ENCODE measurements at regions of chr22 and their contacts with region 1.

Region 1: DNA sequence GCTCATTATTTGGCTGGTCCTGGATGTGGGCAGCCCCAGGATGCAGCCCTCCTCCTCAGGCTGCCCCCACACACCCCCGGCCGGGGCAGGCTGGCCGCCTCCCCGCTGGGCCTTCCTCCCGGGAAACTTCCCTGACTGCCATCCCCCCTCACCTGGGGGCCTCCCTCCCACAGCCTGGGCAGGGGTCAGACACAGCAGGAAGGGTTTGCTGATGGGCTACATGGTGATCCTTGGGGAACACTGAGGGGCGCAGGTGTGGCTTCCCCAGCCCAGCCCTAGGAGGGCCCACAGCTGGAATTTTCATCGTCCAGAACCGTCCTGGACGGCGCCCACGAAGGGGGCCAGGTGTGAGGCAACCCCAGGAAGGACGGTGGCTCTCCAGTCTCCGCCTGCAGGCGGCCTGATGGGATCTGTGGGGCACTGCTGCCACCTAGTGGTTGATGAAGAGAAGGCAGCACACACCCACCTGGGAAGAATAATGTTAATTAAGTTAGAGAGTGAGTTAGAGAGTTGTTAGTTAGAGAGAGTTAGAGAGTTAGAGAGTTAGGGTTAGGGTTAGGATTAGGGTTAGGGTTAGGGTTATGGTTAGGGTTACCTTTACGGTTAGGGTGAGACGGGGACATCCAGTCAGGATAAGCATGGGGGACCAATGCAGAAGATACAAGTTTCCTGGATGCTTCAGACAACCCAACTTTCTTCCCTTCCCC is 75.9 kb upstream of the PRR5 start:
- DNase-seq: peak; percentile 65 to 85 (median 85)
- ATAC-seq: peak; percentile 64 to 66
- H3K4me3 ChIP-seq: no peak overlapping the region
- H3K27ac ChIP-seq: no peak overlapping the region
- H3K4me1 ChIP-seq: no peaks in the 10 kb centered on the region
- H3K27me3 ChIP-seq: no peaks in the 10 kb centered on the region

Region 2: GRCh38 chr22:43993027-43993760 is 632.9 kb before region 1 on chr22:
- intact Hi-C with region 1: loop called (anchors 2 to 5 kb)
- DNase-seq: peak; percentile 50 to 82 (median 74)
- ATAC-seq: peak; percentile 73 to 75
- H3K4me3 ChIP-seq: no peak overlapping the region
- H3K27ac ChIP-seq: no peak overlapping the region
- H3K4me1 ChIP-seq: no peaks in the 10 kb centered on the region
- H3K27me3 ChIP-seq: no peaks in the 10 kb centered on the region

Region 3: GRCh38 chr22:44074337-44074984 is 551.7 kb before region 1 on chr22:
- intact Hi-C with region 1: loop called in 1 of 4 experiments (anchors 10 kb)
- DNase-seq: no peak
- ATAC-seq: peak in 1 of 2 donors; percentile 19
- H3K4me3 ChIP-seq: no peak overlapping the region
- H3K27ac ChIP-seq: no peak overlapping the region
- H3K4me1 ChIP-seq: no peaks in the 10 kb centered on the region
- H3K27me3 ChIP-seq: no peaks in the 10 kb centered on the region

Region 4: GRCh38 chr22:44080936-44081861 is 544.9 kb before region 1 on chr22:
- intact Hi-C with region 1: loop called (anchors 5 to 10 kb)
- DNase-seq: peak; percentile 81 to 93 (median 83)
- ATAC-seq: peak in 1 of 2 donors; percentile 21
- H3K4me3 ChIP-seq: no peak overlapping the region
- H3K27ac ChIP-seq: no peak overlapping the region
- H3K4me1 ChIP-seq: no peaks in the 10 kb centered on the region
- H3K27me3 ChIP-seq: no peaks in the 10 kb centered on the region

Region 5: GRCh38 chr22:44289414-44290171 is 336.5 kb before region 1 on chr22:
- intact Hi-C with region 1: no loop called
- DNase-seq: peak in 1 of 3 donors; percentile 41
- ATAC-seq: no peak
- H3K4me3 ChIP-seq: no peak overlapping the region
- H3K27ac ChIP-seq: no peak overlapping the region
- H3K4me1 ChIP-seq: no peaks in the 10 kb centered on the region
- H3K27me3 ChIP-seq: no peaks in the 10 kb centered on the region

Region 6: GRCh38 chr22:44337678-44338004 is 288.5 kb before region 1 on chr22:
- intact Hi-C with region 1: loop called in 1 of 4 experiments (anchors 10 kb)
- DNase-seq: peak in 2 of 3 donors; percentile 63 to 69
- ATAC-seq: peak in 1 of 2 donors; percentile 30
- H3K4me3 ChIP-seq: no peak overlapping the region
- H3K27ac ChIP-seq: no peak overlapping the region
- H3K4me1 ChIP-seq: no peaks in the 10 kb centered on the region
- H3K27me3 ChIP-seq: no peaks in the 10 kb centered on the region

Measured in right cardiac atrium (tissue), 5 donors.